ENCODE measurements at regions of chr6 and their contacts with region 1.

Region 1: GRCh38 chr6:135851442-135852271 is at the start of gene PDE7B:
- DNase-seq: peak; percentile 52
- H3K4me3 Mint-ChIP-seq: peak within 1 kb of the TSS; percentile 88
- H3K27ac Mint-ChIP-seq: peak within 1 kb of the TSS; percentile 88
- H3K4me1 Mint-ChIP-seq: peaks cover 47% of the 10 kb centered on the region
- H3K27me3 Mint-ChIP-seq: peaks cover 5% of the 10 kb centered on the region
- total RNA-seq, gene PDE7B: 10.7 and 11.1 TPM in 2 replicates

Region 2: DNA sequence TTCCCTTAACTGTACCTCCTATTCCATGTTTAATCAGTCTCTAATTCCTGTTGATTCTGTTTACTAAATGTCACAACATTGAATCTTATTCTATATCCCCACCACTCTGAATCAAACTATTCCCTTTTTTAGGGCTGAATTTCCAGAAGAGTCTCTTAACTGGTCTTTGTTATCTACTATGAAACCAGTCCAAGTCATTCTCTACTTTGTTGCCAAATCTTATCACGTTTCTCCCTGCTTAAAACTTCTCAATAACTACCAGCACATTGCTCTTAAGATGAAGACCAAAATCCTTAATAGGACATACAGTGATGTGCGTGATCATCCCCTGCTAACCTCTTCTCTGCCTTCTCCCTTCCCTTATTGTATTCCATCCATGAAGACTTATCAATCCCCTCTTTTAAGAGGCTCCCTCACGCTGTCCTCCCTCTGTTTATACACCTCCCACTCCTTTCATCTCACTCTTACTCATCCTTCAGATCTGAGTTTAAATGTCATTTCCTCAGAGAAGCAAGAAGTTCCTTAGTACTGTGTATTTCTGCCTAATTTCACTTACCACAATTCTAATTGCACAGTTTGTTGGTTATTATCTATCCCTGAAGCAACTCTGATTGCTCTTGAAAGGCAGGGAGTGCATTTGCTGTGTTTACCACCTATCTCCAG is 211.1 kb before region 1 on chr6:
- intact Hi-C with region 1: no loop called
- DNase-seq: no peak
- H3K4me3 Mint-ChIP-seq: peak overlapping the region; percentile 38
- H3K27ac Mint-ChIP-seq: peak overlapping the region; percentile 91
- H3K4me1 Mint-ChIP-seq: peaks cover 68% of the 10 kb centered on the region
- H3K27me3 Mint-ChIP-seq: peaks cover 2% of the 10 kb centered on the region

Region 3: GRCh38 chr6:135651964-135652755 is 199.5 kb before region 1 on chr6:
- intact Hi-C with region 1: loop called (anchors 2 kb)
- DNase-seq: no peak
- H3K4me3 Mint-ChIP-seq: peak overlapping the region; percentile 57
- H3K27ac Mint-ChIP-seq: peak overlapping the region; percentile 91
- H3K4me1 Mint-ChIP-seq: peaks cover 44% of the 10 kb centered on the region
- H3K27me3 Mint-ChIP-seq: no peaks in the 10 kb centered on the region

Region 4: DNA sequence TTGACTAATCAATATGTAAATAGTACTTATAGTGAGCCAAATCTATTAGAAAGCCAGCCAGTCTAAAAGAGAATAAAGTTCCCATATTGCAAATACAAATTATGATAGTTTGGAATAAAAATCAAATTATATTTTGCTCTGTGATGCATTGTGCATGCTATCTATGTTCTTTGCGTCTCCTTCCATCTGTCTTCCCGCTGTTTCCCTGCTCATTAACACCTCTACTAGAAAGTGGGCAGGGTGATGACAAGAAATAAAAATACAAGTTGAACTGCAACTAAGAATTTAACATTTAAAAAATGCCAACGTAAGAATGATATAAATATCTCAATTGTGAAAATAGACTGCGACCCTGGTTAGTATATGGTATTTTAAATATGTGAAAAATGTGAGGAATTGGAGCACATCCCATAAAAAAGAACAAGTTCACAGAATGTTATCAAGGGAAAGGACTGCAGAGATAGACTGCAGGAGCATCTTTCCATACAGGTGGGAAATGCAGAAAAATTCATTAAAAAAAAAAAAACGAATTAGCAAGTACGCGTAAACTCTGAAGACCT is 157.8 kb before region 1 on chr6:
- intact Hi-C with region 1: loop called (anchors 5 kb)
- DNase-seq: no peak
- H3K4me3 Mint-ChIP-seq: no peak overlapping the region
- H3K27ac Mint-ChIP-seq: no peak overlapping the region
- H3K4me1 Mint-ChIP-seq: peaks cover 27% of the 10 kb centered on the region
- H3K27me3 Mint-ChIP-seq: peaks cover 7% of the 10 kb centered on the region

Region 5: DNA sequence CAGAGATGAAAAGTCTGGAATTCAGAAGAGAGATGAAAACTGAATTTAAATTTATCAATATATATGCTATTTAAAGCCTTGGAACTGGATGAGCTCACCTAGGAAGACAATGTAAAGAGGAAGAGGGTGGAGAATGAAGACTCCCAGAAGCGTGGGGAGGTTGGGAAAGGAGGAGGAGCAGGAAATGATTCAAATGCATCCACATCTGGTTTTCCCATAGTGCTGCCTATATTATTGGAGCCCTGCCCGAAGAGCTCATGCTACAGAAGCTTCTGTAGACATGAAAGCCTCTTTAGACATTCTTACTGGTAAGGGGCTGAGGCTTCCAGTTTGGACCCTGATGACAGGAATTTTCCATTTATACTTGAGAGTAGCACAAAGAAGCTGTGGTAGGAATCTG is 19.1 kb after region 1 on chr6:
- intact Hi-C with region 1: loop called (anchors 2 kb)
- DNase-seq: no peak
- H3K4me3 Mint-ChIP-seq: no peak overlapping the region
- H3K27ac Mint-ChIP-seq: peak overlapping the region; percentile 14
- H3K4me1 Mint-ChIP-seq: peaks cover 23% of the 10 kb centered on the region
- H3K27me3 Mint-ChIP-seq: no peaks in the 10 kb centered on the region

Region 6: GRCh38 chr6:135901774-135902524 is 50.3 kb after region 1 on chr6:
- intact Hi-C with region 1: loop called (anchors 2 kb)
- DNase-seq: no peak
- H3K4me3 Mint-ChIP-seq: peak overlapping the region; percentile 48
- H3K27ac Mint-ChIP-seq: peak overlapping the region; percentile 70
- H3K4me1 Mint-ChIP-seq: peaks cover 53% of the 10 kb centered on the region
- H3K27me3 Mint-ChIP-seq: no peaks in the 10 kb centered on the region

Region 7: GRCh38 chr6:136289579-136290409 is 438.1 kb after region 1 on chr6 and contains the start of gene BCLAF1:
- intact Hi-C with region 1: loop called (anchors 1 kb)
- DNase-seq: peak; percentile 100
- H3K4me3 Mint-ChIP-seq: peak within 1 kb of the TSS; percentile 98
- H3K27ac Mint-ChIP-seq: peak within 1 kb of the TSS; percentile 99
- H3K4me1 Mint-ChIP-seq: peaks cover 48% of the 10 kb centered on the region
- H3K27me3 Mint-ChIP-seq: peaks cover 2% of the 10 kb centered on the region
- total RNA-seq, gene BCLAF1: 233 and 237 TPM in 2 replicates

Measured in activated T-helper 1 cell treated with anti-CD3 and anti-CD28 coated beads, Interleukin-12 subunit alpha, Interleukin-12 subunit beta, Interleukin-2, Interleukin-4 antibody, amounts not matched to agents 30 ng/mL and 10 ng/mL and 1 ng/mL, durations not matched to agents 14 hours and 24 hours and 36 hours (primary cell).